ENCODE measurements at regions of chr9 and their contacts with region 1.

Region 1: GRCh38 chr9:113657703-113658544 is 194.4 kb downstream of the RGS3 start:
- DNase-seq: peak; percentile 67
- H3K4me3 ChIP-seq: no peak overlapping the region
- H3K27ac ChIP-seq: no peak overlapping the region
- H3K4me1 ChIP-seq: peaks cover 5% of the 10 kb centered on the region
- H3K27me3 ChIP-seq: no peaks in the 10 kb centered on the region
- CTCF ChIP-seq: peak; percentile 93 to 97

Region 2: GRCh38 chr9:112605518-112605917 is 1052.4 kb before region 1 on chr9:
- CTCF ChIA-PET with region 1: no interaction called
- dilution Hi-C with region 1: no loop called
- in situ Hi-C with region 1: no loop called
- intact Hi-C with region 1: no loop called
- DNase-seq: no peak
- H3K4me3 ChIP-seq: no peak overlapping the region
- H3K27ac ChIP-seq: no peak overlapping the region
- H3K4me1 ChIP-seq: no peaks in the 10 kb centered on the region
- H3K27me3 ChIP-seq: no peaks in the 10 kb centered on the region
- CTCF ChIP-seq: no peak

Region 3: DNA sequence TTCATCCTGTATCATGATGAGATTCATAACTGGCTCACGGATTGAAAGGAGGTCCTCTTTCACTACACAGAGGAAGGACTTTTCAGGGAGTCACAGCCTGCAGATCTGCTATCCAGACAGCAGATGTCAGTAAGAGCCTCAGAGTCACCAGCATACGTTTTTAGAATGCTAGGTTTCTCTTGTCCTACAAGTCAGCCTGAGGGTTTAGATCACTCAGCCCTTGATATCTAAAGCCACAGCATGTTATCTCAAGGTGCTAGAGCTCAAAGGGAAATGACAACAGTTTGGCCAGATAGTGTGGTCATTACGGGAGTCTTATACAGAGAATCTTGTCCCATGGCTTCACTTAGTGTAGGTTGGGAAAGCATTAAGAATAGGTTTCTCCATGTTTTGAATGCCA is 736.4 kb before region 1 on chr9:
- CTCF ChIA-PET with region 1: no interaction called
- dilution Hi-C with region 1: no loop called
- in situ Hi-C with region 1: no loop called
- intact Hi-C with region 1: loop called (anchors 2 kb)
- DNase-seq: peak; percentile 52
- H3K4me3 ChIP-seq: no peak overlapping the region
- H3K27ac ChIP-seq: no peak overlapping the region
- H3K4me1 ChIP-seq: peaks cover 12% of the 10 kb centered on the region
- H3K27me3 ChIP-seq: no peaks in the 10 kb centered on the region
- CTCF ChIP-seq: peak; percentile 64 to 84

Region 4: DNA sequence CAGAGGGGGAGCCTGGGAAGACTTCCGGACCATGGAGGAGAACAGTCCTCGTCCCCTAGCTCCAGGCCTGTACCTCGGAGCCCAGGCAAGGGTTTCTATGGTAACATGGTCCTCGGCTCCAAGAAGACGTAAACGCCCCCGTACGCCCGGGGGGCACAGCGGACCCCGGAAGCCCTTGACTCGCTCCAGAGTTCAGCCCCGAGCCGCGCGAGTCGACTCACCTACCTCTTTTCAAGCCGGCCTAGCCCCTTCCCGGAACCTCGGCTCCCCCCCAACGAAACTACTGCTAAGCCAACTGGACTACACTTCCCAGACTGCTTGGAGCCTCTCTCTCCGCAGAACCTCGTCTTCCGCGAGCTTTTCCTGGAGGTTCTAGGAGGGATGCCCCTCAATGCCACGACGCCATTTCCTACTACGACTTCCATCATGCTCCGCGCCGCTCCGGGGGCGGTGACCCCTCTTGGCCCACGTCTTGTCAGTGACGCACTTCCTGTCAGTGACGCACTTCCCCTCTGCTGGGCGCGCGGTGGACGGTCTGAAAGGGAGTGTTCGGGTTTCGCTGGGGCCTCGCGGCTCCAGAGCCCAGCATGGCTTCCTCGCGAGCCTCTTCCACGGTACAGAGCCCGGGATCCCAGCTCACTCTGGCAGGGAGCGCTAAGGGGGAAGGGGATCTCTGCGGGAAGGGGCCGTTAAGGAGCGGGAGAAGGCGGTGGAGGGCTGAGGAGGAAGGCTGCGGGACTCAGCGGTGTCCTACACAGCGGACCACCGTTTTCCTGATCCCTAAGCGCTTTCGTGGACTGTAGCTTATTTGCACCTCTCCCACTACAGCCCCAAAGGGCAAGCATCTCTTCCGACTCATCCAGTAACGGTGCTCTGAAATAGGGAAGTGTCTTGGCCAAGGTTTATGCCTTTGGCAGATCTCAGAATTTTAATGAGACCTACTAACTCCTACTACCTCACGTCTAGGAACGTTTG is 382.5 kb before region 1 on chr9 and contains the starts of genes CDC26 and PRPF4:
- CTCF ChIA-PET with region 1: no interaction called
- dilution Hi-C with region 1: no loop called
- in situ Hi-C with region 1: no loop called
- intact Hi-C with region 1: loop called (anchors 1 kb)
- DNase-seq: peak; percentile 98
- H3K4me3 ChIP-seq: peak within 1 kb of the TSS; percentile 63 to 89 (median 82)
- H3K27ac ChIP-seq: peak within 1 kb of the TSS; percentile 91
- H3K4me1 ChIP-seq: peaks cover 15% of the 10 kb centered on the region
- H3K27me3 ChIP-seq: no peaks in the 10 kb centered on the region
- CTCF ChIP-seq: no peak
- total RNA-seq, gene CDC26: 16.2 to 26.4 TPM
- total RNA-seq, gene PRPF4: 24.2 to 38.1 TPM

Region 5: DNA sequence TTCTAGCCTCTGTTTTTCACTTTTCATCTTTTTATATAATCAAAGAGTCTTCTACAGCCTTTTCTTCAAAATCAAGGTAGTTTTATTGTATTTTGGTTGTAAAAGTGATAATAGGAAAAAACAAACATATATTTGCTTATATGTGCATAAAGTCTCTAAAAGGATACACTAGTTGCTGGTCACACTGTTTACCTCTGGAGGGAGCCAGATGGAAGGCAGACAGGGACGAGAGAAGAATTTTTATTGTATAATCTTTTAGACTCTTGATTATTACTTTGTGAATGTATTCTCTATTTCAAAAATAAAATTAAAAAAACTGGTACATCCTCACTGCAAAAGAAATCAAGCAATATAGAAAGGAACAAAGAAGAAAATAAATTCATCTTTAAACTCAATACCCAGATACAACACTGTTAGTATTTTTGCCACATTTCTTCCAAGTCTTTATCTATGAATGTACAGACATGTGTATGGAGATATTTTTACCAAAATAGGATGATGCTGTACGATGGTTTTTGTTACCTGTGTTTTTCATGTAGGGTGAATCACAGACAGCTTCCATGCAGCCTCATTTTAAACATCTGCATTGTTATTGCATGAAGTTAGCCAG is 348.6 kb before region 1 on chr9:
- CTCF ChIA-PET with region 1: no interaction called
- dilution Hi-C with region 1: no loop called
- in situ Hi-C with region 1: loop called (anchors 25 kb)
- intact Hi-C with region 1: loop called (anchors 1 kb)
- DNase-seq: peak; percentile 9
- H3K4me3 ChIP-seq: no peak overlapping the region
- H3K27ac ChIP-seq: no peak overlapping the region
- H3K4me1 ChIP-seq: no peaks in the 10 kb centered on the region
- H3K27me3 ChIP-seq: no peaks in the 10 kb centered on the region
- CTCF ChIP-seq: peak; percentile 75 to 78

Region 6: GRCh38 chr9:113427629-113428028 is 230.3 kb before region 1 on chr9:
- CTCF ChIA-PET with region 1: interaction called, 25 read pairs
- dilution Hi-C with region 1: no loop called
- in situ Hi-C with region 1: no loop called
- intact Hi-C with region 1: no loop called
- DNase-seq: peak; percentile 36
- H3K4me3 ChIP-seq: no peak overlapping the region
- H3K27ac ChIP-seq: no peak overlapping the region
- H3K4me1 ChIP-seq: no peaks in the 10 kb centered on the region
- H3K27me3 ChIP-seq: no peaks in the 10 kb centered on the region
- CTCF ChIP-seq: no peak

Region 7: GRCh38 chr9:113446323-113446740 is 211.6 kb before region 1 on chr9:
- CTCF ChIA-PET with region 1: interaction called, 7 read pairs
- dilution Hi-C with region 1: no loop called
- in situ Hi-C with region 1: loop called (anchors 5 kb)
- intact Hi-C with region 1: loop called (anchors 1 kb)
- DNase-seq: peak; percentile 24
- H3K4me3 ChIP-seq: no peak overlapping the region
- H3K27ac ChIP-seq: no peak overlapping the region
- H3K4me1 ChIP-seq: no peaks in the 10 kb centered on the region
- H3K27me3 ChIP-seq: no peaks in the 10 kb centered on the region
- CTCF ChIP-seq: peak; percentile 34 to 55

Region 8: DNA sequence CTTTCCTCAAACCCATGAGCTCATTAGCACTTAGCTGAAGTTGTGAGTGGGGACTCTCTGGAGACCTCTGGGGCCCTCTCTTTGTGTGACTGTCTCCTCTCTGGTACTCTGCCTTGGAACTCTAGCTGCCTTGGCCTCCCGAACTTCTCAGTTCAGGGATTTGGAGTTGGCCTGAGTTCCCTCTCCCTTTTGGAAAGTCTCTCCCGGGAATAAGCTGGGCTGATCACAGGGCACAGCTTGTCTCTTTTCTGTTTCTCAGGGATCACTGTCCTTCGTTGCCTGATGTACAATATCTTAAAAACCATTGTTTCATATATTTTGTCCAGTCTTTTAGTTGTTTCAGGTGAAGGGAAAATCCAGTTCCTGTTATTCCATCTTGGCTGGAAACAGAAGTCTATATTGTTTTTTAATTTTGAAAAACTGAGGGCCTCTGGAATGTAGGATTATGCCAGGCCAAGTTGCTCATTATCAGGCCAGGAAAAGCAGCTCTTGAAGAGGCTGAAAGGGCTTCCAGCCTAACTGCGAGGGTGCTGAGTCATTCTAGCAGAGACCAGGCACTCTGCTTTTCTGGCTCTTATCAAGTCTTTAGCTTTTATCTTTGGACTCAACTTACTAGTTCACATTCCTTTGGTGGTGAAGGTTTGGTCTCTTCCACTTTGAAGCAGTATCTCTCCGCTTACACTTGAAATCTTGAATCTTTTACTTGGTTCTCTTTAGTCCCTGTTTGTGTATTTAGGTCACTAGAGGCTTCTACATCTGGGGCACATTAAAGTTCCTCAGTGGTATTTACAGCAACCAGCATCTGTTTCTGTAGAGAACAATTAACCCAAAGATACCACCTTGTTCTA is 202.8 kb before region 1 on chr9:
- CTCF ChIA-PET with region 1: no interaction called
- dilution Hi-C with region 1: no loop called
- in situ Hi-C with region 1: no loop called
- intact Hi-C with region 1: loop called (anchors 2 kb)
- DNase-seq: peak; percentile 40
- H3K4me3 ChIP-seq: no peak overlapping the region
- H3K27ac ChIP-seq: no peak overlapping the region
- H3K4me1 ChIP-seq: peaks cover 6% of the 10 kb centered on the region
- H3K27me3 ChIP-seq: no peaks in the 10 kb centered on the region
- CTCF ChIP-seq: no peak

Region 9: GRCh38 chr9:113828221-113828620 is 170.3 kb after region 1 on chr9:
- CTCF ChIA-PET with region 1: no interaction called
- dilution Hi-C with region 1: no loop called
- in situ Hi-C with region 1: no loop called
- intact Hi-C with region 1: no loop called
- DNase-seq: no peak
- H3K4me3 ChIP-seq: no peak overlapping the region
- H3K27ac ChIP-seq: no peak overlapping the region
- H3K4me1 ChIP-seq: no peaks in the 10 kb centered on the region
- H3K27me3 ChIP-seq: no peaks in the 10 kb centered on the region
- CTCF ChIP-seq: no peak